Activated CD8-positive, alpha-beta memory T cell treated with anti-CD3 and anti-CD28 coated beads, Interleukin-2, amount 10 ng/mL, durations not matched to agents 7 days and 5 days (primary cell): ENCODE measurements at regions of chr2 and their contacts with region 1.

Region 1: DNA sequence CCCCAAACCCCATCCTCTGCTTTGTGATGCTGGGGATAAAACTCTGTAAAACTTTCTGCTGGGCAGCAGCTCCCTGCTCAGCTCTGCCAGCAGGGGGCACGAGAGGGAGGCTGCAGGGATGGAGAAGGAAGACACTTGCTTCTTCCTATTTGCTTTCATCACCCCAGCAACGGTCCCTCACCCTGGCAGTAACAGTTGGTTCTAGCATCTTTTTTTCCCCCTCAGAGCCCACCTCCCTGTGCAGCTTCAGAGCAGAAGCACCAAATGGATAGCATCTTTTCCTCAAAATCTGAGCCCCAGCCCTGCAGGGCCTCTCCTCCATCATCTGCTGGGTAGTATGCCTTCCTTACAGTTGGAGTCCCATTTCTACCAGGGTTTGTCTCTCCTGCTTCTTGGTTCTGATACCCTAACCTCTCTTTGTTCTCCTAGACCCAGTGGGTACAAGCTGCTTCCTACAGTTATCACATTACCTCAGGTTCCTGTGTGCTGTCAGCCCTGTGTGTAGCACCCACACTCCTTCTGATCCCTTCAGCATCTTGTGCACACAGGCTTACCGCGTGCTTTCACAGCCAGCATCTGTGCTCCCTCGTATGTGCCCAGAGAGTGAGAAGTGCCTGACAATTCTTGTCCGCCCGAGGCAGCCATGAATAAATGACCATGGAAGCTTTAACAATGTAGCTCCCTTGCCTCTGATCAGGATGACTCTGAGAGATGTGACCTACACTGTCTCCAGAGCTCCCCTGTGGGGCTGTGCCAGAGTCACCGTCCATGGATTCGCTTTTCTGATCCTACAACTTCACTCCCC is 14.5 kb downstream of the CKAP2L start:
- DNase-seq: peak; percentile 91
- ATAC-seq: peak; percentile 89
- H3K4me3 Mint-ChIP-seq: peak overlapping the region; percentile 1
- H3K27ac Mint-ChIP-seq: peak overlapping the region; percentile 80
- H3K4me1 Mint-ChIP-seq: peaks cover 48% of the 10 kb centered on the region
- H3K27me3 Mint-ChIP-seq: no peaks in the 10 kb centered on the region

Region 2: DNA sequence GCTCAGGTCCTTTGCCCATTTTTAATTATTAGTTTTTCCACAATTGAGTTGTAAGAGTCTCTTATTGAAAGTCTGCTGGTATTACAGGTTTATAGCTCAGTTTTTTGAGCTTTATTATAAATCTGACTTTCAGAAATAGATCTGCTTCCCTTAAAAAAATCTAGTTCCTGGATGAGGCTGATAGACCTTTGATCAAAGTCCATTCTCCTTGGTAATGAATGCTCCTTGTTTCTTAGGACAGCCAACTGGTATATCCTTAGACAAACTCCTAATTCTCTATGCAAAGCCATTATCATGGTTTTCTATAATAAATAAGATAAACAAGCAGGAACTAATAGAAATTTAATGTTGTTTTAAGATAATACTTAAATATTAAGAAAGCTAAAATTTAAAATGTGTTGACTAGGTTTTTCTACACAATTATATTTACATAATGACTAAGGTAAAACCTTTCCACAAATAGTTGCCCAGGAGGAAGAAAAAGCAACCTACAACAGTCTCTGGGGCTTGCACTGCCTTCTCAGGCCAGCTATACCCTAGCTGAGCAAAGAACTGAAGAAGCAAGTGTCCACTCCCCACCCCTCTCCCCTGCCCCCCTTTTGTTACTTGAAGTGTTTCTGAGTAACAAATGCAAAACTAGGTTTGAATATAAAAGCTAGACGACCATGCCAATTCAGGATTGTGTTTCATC is 12.3 kb before region 1 on chr2:
- CTCF ChIA-PET with region 1: interaction called, 14 read pairs
- DNase-seq: no peak
- ATAC-seq: no peak
- H3K4me3 Mint-ChIP-seq: no peak overlapping the region
- H3K27ac Mint-ChIP-seq: no peak overlapping the region
- H3K4me1 Mint-ChIP-seq: no peaks in the 10 kb centered on the region
- H3K27me3 Mint-ChIP-seq: no peaks in the 10 kb centered on the region

Region 3: DNA sequence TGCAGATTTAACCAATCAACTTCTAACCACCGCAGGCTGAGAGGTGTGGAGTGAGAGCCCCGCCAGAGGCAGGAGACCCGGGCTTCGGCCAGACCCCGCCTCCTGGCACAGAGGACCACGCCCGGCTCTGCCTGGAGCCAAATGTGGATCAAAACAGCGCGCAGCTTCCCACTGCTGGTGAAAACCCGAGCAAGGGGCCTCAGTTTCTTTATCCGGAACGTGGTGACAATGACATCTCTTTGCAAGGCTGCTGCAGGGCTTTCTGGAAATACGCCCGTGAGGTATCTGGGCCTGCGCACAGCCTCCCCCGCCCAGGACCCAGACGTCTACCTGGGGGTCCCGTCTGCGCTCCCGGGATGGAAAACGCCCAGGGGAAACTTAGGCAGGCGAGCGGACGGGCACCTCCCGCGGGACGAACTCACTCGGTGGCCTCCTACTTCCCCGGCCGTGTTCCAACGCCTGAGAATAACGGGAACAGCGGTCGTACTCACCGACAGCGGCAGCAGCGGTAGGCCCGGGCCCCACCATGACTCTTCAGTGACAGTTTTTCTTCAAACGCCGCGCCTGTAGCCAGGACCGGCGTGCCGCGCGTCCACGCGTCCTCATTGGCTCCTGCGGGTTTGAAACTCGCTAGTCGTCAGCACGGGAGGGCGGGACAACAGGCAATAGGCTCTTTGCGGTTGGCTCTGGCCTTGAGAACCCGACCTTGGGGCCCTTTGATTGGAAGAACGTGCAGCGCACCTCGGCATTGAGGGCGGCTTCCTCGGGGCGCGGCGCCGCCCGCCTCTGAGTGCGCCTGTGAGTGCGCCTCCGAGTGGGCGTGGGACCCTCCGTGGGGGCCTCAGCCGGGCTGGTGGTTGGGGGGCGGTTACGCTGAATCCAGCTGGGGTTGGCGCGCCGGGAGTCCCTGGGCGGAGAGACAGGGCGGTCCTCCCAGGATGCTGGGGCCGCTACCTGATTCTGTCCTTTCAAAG is 14.4 kb after region 1 on chr2 and contains the start of gene CKAP2L:
- CTCF ChIA-PET with region 1: interaction called, 10 read pairs
- DNase-seq: peak; percentile 99
- ATAC-seq: peak; percentile 97
- H3K4me3 Mint-ChIP-seq: peak within 1 kb of the TSS; percentile 85
- H3K27ac Mint-ChIP-seq: peak within 1 kb of the TSS; percentile 99
- H3K4me1 Mint-ChIP-seq: peaks cover 57% of the 10 kb centered on the region
- H3K27me3 Mint-ChIP-seq: no peaks in the 10 kb centered on the region
- total RNA-seq, gene CKAP2L: 62.2 to 68.8 TPM

Region 4: GRCh38 chr2:112920923-112921532 is 171.1 kb after region 1 on chr2:
- CTCF ChIA-PET with region 1: interaction called, 27 read pairs
- DNase-seq: peak; percentile 80
- ATAC-seq: peak; percentile 82
- H3K4me3 Mint-ChIP-seq: no peak overlapping the region
- H3K27ac Mint-ChIP-seq: peak overlapping the region; percentile 81
- H3K4me1 Mint-ChIP-seq: peaks cover 30% of the 10 kb centered on the region
- H3K27me3 Mint-ChIP-seq: peaks cover 1% of the 10 kb centered on the region

Region 5: GRCh38 chr2:112958428-112959108 is 208.6 kb after region 1 on chr2:
- CTCF ChIA-PET with region 1: interaction called, 12 read pairs
- DNase-seq: peak; percentile 58
- ATAC-seq: peak; percentile 77
- H3K4me3 Mint-ChIP-seq: no peak overlapping the region
- H3K27ac Mint-ChIP-seq: no peak overlapping the region
- H3K4me1 Mint-ChIP-seq: no peaks in the 10 kb centered on the region
- H3K27me3 Mint-ChIP-seq: peaks cover 12% of the 10 kb centered on the region